H1 (cell line): ENCODE measurements at regions of chr3 and their contacts with region 1.

Region 1: DNA sequence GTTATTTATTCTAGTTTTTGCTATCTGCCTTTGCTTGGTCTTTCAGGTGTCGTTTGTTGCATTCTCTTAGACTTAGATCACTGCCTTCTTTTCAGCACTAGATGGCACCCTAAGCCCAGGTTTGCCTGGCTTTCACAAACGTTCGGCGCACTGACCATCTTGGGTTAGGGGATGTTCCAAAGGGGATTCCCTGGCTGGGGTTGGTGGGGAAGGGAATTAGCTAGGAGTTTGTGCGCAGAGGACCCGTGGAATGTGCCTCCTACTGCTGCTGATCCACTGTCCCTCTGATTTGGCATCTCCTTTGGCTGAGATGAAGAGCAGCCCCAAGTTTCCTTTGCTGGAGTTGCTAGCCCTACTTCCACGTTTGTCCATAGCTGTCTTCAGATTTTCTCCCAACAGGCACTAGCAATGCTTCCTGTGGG is 33.9 kb downstream of the PFN2 start:
- DNase-seq: peak; percentile 50 to 63
- H3K4me3 ChIP-seq: no peak overlapping the region
- H3K27ac ChIP-seq: no peak overlapping the region
- H3K4me1 ChIP-seq: no peaks in the 10 kb centered on the region
- H3K27me3 ChIP-seq: no peaks in the 10 kb centered on the region
- CTCF ChIP-seq: peak; percentile 45 to 86 (median 83)
- EP300 ChIP-seq: no peak
- POLR2A ChIP-seq: no peak
- RAD21 ChIP-seq: peak; percentile 98

Region 2: GRCh38 chr3:149752051-149752787 is 184.6 kb before region 1 on chr3 and contains the start of gene COMMD2:
- CTCF ChIA-PET with region 1: no interaction called
- POLR2A ChIA-PET with region 1: no interaction called
- DNase-seq: peak; percentile 69 to 81
- H3K4me3 ChIP-seq: peak within 1 kb of the TSS; percentile 84 to 96 (median 94)
- H3K27ac ChIP-seq: peak within 1 kb of the TSS; percentile 80; the same call in 1 of the 2 replicates
- H3K4me1 ChIP-seq: no peaks in the 10 kb centered on the region; a peak in 2 of 7 replicates
- H3K27me3 ChIP-seq: no peaks in the 10 kb centered on the region
- CTCF ChIP-seq: peak in 2 of 3 experiments; percentile 6 to 13; a peak in 2 of 4 replicates
- EP300 ChIP-seq: peak in 1 of 2 experiments; percentile 89; a peak in 1 of 3 replicates
- POLR2A ChIP-seq: peak; percentile 85 to 94
- RAD21 ChIP-seq: peak; percentile 4 to 16; a peak in 1 of 4 replicates
- total RNA-seq, gene COMMD2: 51.6 and 57.2 TPM in 2 replicates

Region 3: DNA sequence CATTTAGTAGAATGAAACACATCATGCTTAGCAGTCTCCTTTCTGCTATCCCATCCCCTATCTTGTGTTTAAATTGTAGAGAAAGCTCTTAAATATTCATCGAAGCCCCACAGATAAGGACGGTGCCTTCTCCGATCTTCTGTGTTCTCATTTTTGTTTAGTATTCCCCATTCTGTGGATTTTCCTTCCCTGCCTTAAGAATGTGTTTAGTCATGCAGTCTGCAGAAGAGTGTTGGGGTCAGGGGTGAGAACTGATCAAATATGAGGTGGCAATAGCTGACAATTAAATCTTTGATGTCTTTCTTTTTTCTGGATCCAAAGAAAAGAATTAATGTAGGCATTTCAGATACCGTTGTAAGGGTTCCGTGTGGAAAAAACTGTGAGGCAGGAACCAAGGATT is 135.2 kb before region 1 on chr3:
- CTCF ChIA-PET with region 1: no interaction called
- POLR2A ChIA-PET with region 1: no interaction called
- DNase-seq: no peak
- H3K4me3 ChIP-seq: no peak overlapping the region
- H3K27ac ChIP-seq: no peak overlapping the region
- H3K4me1 ChIP-seq: no peaks in the 10 kb centered on the region
- H3K27me3 ChIP-seq: no peaks in the 10 kb centered on the region
- CTCF ChIP-seq: no peak
- EP300 ChIP-seq: no peak
- POLR2A ChIP-seq: no peak
- RAD21 ChIP-seq: no peak

Region 4: GRCh38 chr3:149958171-149958796 is 21.5 kb after region 1 on chr3:
- CTCF ChIA-PET with region 1: interaction called, 10 read pairs
- POLR2A ChIA-PET with region 1: interaction called, 10 read pairs
- DNase-seq: no peak
- H3K4me3 ChIP-seq: no peak overlapping the region
- H3K27ac ChIP-seq: no peak overlapping the region
- H3K4me1 ChIP-seq: peaks cover 0 to 4% (median 2%) of the 10 kb centered on the region in 4 experiments; a peak in 3 of 7 replicates
- H3K27me3 ChIP-seq: no peaks in the 10 kb centered on the region
- CTCF ChIP-seq: peak in 1 of 3 experiments; percentile 52; a peak in 2 of 4 replicates
- EP300 ChIP-seq: no peak
- POLR2A ChIP-seq: peak in 1 of 2 experiments; percentile 38; a peak in 1 of 3 replicates
- RAD21 ChIP-seq: peak; percentile 1 to 32; a peak in 1 of 4 replicates

Region 5: GRCh38 chr3:149969940-149970715 is 33.3 kb after region 1 on chr3:
- CTCF ChIA-PET with region 1: interaction called, 25 read pairs
- POLR2A ChIA-PET with region 1: interaction called, 4 read pairs
- DNase-seq: peak in 1 of 2 experiments; percentile 83
- H3K4me3 ChIP-seq: peak overlapping the region; percentile 79 to 92 (median 88)
- H3K27ac ChIP-seq: peak overlapping the region; percentile 95
- H3K4me1 ChIP-seq: peaks cover 0 to 12% (median 3%) of the 10 kb centered on the region in 4 experiments; a peak in 4 of 7 replicates
- H3K27me3 ChIP-seq: no peaks in the 10 kb centered on the region
- CTCF ChIP-seq: no peak
- EP300 ChIP-seq: no peak
- POLR2A ChIP-seq: peak; percentile 39 to 68
- RAD21 ChIP-seq: no peak

Region 6: GRCh38 chr3:150035301-150035779 is 98.5 kb after region 1 on chr3:
- CTCF ChIA-PET with region 1: no interaction called
- POLR2A ChIA-PET with region 1: no interaction called
- DNase-seq: no peak
- H3K4me3 ChIP-seq: peak overlapping the region in 1 of 4 experiments; percentile 35; a peak in 1 of 8 replicates
- H3K27ac ChIP-seq: no peak overlapping the region
- H3K4me1 ChIP-seq: peaks cover 6 to 29% (median 25%) of the 10 kb centered on the region in 4 experiments; a peak in 5 of 7 replicates
- H3K27me3 ChIP-seq: peaks cover 0 to 17% (median 8%) of the 10 kb centered on the region in 4 experiments; a peak in 5 of 7 replicates
- CTCF ChIP-seq: no peak
- EP300 ChIP-seq: no peak
- POLR2A ChIP-seq: no peak
- RAD21 ChIP-seq: no peak; a peak in 1 of 4 replicates

Region 7: GRCh38 chr3:150083655-150084042 is 146.8 kb after region 1 on chr3:
- CTCF ChIA-PET with region 1: no interaction called
- POLR2A ChIA-PET with region 1: no interaction called
- DNase-seq: no peak
- H3K4me3 ChIP-seq: no peak overlapping the region
- H3K27ac ChIP-seq: no peak overlapping the region
- H3K4me1 ChIP-seq: peaks cover 0 to 3% (median under 1%) of the 10 kb centered on the region in 4 experiments; a peak in 2 of 7 replicates
- H3K27me3 ChIP-seq: no peaks in the 10 kb centered on the region
- CTCF ChIP-seq: no peak
- EP300 ChIP-seq: no peak
- POLR2A ChIP-seq: no peak
- RAD21 ChIP-seq: no peak

Region 8: DNA sequence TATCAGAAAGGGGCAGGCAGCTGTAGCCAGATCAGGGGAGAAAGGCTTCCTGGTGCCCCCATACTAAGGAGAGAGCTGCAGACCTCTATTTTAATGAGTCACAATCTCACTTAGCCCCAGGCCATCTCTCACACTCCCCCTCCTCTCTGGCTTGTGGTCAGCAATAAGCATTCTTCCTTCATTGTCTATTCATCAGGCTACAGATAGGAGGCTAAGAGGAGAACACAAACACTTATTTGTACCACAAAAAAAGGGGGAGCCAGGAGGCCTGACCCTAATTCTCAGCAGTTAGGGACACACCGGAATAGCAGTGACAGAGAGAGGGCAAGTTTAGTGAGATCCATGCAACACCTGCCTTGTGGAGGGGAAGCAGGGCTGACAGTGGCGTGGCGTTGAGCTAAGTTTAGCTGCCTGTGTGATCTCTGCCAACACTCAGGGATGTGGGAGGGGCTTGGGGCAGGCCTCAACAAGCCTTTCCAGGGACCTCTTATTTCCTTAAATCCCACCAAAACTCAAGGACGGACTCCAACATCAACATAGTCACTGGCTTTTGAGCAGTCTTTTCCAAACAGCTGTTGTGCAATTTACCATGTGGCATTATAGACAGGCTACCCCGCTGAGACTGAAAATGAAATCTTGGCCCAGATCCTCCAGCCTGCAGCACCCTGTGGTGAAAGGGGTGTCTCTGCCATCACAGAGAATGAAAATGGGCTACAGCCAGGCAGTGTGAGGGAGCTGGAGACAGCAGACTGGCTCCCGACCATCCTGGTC is 279.4 kb after region 1 on chr3:
- CTCF ChIA-PET with region 1: interaction called, 52 read pairs
- POLR2A ChIA-PET with region 1: interaction called, 4 read pairs
- DNase-seq: no peak
- H3K4me3 ChIP-seq: no peak overlapping the region
- H3K27ac ChIP-seq: no peak overlapping the region
- H3K4me1 ChIP-seq: peaks cover 0 to 6% (median 5%) of the 10 kb centered on the region in 4 experiments; a peak in 5 of 7 replicates
- H3K27me3 ChIP-seq: no peaks in the 10 kb centered on the region
- CTCF ChIP-seq: no peak
- EP300 ChIP-seq: no peak
- POLR2A ChIP-seq: no peak
- RAD21 ChIP-seq: no peak

Region 9: GRCh38 chr3:150227839-150228238 is 291.0 kb after region 1 on chr3:
- CTCF ChIA-PET with region 1: interaction called, 13 read pairs
- POLR2A ChIA-PET with region 1: no interaction called
- DNase-seq: peak; percentile 51 to 91
- H3K4me3 ChIP-seq: no peak overlapping the region
- H3K27ac ChIP-seq: 0 out of 2 replicates have a peak overlapping the region, but pooled peaks have one; percentile 16
- H3K4me1 ChIP-seq: peaks cover 0 to 3% (median 1%) of the 10 kb centered on the region in 4 experiments; a peak in 4 of 7 replicates
- H3K27me3 ChIP-seq: no peaks in the 10 kb centered on the region; a peak in 1 of 7 replicates
- CTCF ChIP-seq: peak; percentile 70 to 97 (median 80)
- EP300 ChIP-seq: no peak
- POLR2A ChIP-seq: no peak
- RAD21 ChIP-seq: peak; percentile 90 to 91